Transverse colon (tissue), 4 donors: ENCODE measurements at regions of chr1 and their contacts with region 1.

Region 1: GRCh38 chr1:27489910-27490741 is at the start of gene WASF2:
- DNase-seq: peak; percentile 98
- H3K4me3 ChIP-seq: peak within 1 kb of the TSS; percentile 80 to 100 (median 90)
- H3K27ac ChIP-seq: peak within 1 kb of the TSS; percentile 96 to 100 (median 99)
- H3K4me1 ChIP-seq: peaks cover 27 to 55% (median 38%) of the 10 kb centered on the region in 4 donors
- H3K27me3 ChIP-seq: no peaks in the 10 kb centered on the region
- CTCF ChIP-seq: no peak
- EP300 ChIP-seq: no peak
- POLR2A ChIP-seq: peak; percentile 96
- total RNA-seq, gene WASF2: 34.6 to 114 (median 60.9) TPM

Region 2: GRCh38 chr1:27416387-27417111 is 73.6 kb before region 1 on chr1:
- in situ Hi-C with region 1: no loop called
- intact Hi-C with region 1: loop called (anchors 5 kb)
- DNase-seq: peak; percentile 49
- H3K4me3 ChIP-seq: no peak overlapping the region
- H3K27ac ChIP-seq: peak overlapping the region; percentile 76 to 87 (median 82)
- H3K4me1 ChIP-seq: peaks cover 22 to 38% (median 29%) of the 10 kb centered on the region in 4 donors
- H3K27me3 ChIP-seq: no peaks in the 10 kb centered on the region
- CTCF ChIP-seq: peak; percentile 57 to 69 (median 60)
- EP300 ChIP-seq: no peak
- POLR2A ChIP-seq: no peak